ENCODE measurements at regions of chr1 and their contacts with region 1.

Region 1: GRCh38 chr1:200558866-200559459 is 61.6 kb downstream of the KIF14 start:
- DNase-seq: no peak
- ATAC-seq: peak; percentile 64
- H3K4me3 ChIP-seq: no peak overlapping the region
- H3K27ac ChIP-seq: no peak overlapping the region
- H3K4me1 ChIP-seq: peaks cover 17% of the 10 kb centered on the region
- H3K27me3 ChIP-seq: no peaks in the 10 kb centered on the region
- CTCF ChIP-seq: peak; percentile 56 to 77 (median 60)
- EP300 ChIP-seq: no peak
- POLR2A ChIP-seq: no peak
- RAD21 ChIP-seq: peak; percentile 82

Region 2: DNA sequence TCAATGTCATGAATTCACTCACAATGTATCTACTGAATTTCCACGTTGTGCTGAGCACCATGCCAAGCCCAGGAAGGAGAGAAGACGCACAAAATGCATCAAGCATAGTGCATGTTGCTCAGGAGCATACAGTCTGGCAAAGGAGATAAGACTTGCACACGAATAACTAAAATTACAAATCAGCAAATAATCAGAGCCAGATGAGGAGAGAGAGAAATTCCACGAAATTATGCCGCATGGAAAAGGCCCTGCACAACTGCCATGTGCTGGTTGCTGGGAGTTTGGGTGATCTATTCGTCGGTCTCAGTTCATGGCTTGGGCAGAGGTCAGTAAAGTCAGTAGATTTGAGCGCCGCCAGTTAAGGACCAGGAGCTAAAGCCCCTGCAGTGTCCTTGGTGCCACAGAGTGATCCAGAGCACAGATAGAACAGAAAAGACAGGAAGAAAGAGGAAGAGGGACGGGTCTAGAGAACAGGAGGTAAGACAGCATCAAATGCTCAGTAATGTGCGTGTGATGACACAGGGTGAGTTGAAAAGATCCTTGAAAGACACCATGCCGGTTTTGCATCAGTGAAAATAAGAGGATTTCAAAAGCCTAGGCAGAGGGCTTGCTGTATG is 94.1 kb before region 1 on chr1:
- CTCF ChIA-PET with region 1: no interaction called
- POLR2A ChIA-PET with region 1: no interaction called
- RAD21 ChIA-PET with region 1: no interaction called
- SMC1A ChIA-PET with region 1: no interaction called
- in situ Hi-C with region 1: no loop called
- intact Hi-C with region 1: no loop called
- DNase-seq: no peak
- ATAC-seq: no peak
- H3K4me3 ChIP-seq: no peak overlapping the region
- H3K27ac ChIP-seq: no peak overlapping the region
- H3K4me1 ChIP-seq: no peaks in the 10 kb centered on the region
- H3K27me3 ChIP-seq: no peaks in the 10 kb centered on the region
- CTCF ChIP-seq: no peak
- EP300 ChIP-seq: no peak
- POLR2A ChIP-seq: no peak
- RAD21 ChIP-seq: no peak

Region 3: DNA sequence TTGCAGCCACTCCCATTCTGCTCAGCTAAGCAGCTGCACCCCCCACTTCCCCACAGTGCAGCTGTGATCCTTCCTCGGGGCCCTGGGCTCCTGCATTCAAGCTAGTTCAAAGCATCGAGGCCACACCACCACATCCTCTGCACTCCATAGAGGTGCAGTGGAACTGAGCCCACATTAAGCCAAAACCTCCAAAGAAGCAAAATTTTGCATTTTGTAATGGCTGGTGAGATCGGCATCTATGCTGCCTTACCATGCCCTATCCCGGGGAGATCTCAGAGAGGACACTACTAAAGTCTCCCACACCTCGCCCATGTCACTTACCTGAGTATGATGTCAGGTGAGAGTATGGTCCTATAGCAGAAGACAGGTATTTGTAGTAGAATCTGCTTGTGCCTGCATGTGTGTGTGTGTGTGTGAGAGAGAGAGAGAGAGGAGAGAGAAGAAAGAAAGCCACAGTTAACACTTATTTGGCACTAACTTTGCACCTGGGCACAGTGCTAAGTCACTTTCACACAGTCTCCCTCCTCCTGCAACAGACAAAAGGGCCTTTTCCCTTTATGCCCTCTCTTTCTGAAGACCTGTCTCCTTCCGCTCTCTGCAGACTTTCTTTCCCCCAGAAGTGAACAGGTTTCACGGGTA is 28.2 kb before region 1 on chr1:
- CTCF ChIA-PET with region 1: interaction called, 46 read pairs
- POLR2A ChIA-PET with region 1: no interaction called
- RAD21 ChIA-PET with region 1: interaction called, 11 read pairs
- SMC1A ChIA-PET with region 1: interaction called, 3 read pairs
- in situ Hi-C with region 1: no loop called
- intact Hi-C with region 1: no loop called
- DNase-seq: no peak
- ATAC-seq: peak; percentile 21; the same call in 2 of the 3 replicates
- H3K4me3 ChIP-seq: no peak overlapping the region
- H3K27ac ChIP-seq: no peak overlapping the region
- H3K4me1 ChIP-seq: peaks cover 11% of the 10 kb centered on the region
- H3K27me3 ChIP-seq: no peaks in the 10 kb centered on the region
- CTCF ChIP-seq: no peak
- EP300 ChIP-seq: no peak
- POLR2A ChIP-seq: no peak
- RAD21 ChIP-seq: no peak

Region 4: GRCh38 chr1:200542162-200542561 is 16.8 kb before region 1 on chr1:
- CTCF ChIA-PET with region 1: interaction called, 46 read pairs
- POLR2A ChIA-PET with region 1: no interaction called
- RAD21 ChIA-PET with region 1: interaction called, 11 read pairs
- SMC1A ChIA-PET with region 1: interaction called, 5 read pairs
- in situ Hi-C with region 1: no loop called
- intact Hi-C with region 1: no loop called
- DNase-seq: no peak
- ATAC-seq: no peak
- H3K4me3 ChIP-seq: no peak overlapping the region
- H3K27ac ChIP-seq: no peak overlapping the region
- H3K4me1 ChIP-seq: peaks cover 4% of the 10 kb centered on the region
- H3K27me3 ChIP-seq: no peaks in the 10 kb centered on the region
- CTCF ChIP-seq: no peak
- EP300 ChIP-seq: no peak
- POLR2A ChIP-seq: no peak
- RAD21 ChIP-seq: no peak

Region 5: DNA sequence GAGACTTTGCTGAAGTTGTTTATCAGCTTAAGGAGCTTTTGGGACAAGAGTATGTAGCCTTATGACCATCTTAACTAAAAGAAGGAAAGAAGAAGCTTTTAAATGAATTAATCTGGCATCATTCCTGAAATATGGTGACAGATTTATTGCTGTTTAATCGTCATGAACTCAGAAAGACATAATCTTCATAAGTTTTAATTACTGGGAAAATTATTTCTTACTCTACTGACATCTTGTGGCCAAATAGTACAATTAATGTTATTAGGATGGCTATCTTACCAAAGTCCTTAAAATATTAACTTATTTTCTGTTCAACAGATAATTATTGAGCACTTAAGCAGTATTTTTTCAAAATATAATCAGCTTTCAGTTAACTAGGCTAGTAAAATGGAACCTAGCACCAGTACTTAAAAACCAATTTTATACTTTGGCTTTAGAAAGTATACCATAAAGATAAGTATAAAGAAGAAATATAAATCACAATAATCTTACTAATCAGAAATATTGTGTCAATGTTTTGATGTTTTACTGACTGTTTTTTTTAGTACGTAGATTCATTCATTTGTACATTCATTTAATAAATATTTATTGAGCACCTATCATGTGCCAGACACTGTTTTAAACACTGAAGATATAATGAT is 279.1 kb after region 1 on chr1:
- CTCF ChIA-PET with region 1: interaction called, 27 read pairs
- POLR2A ChIA-PET with region 1: interaction called, 4 read pairs
- RAD21 ChIA-PET with region 1: interaction called, 9 read pairs
- SMC1A ChIA-PET with region 1: interaction called, 15 read pairs
- in situ Hi-C with region 1: no loop called
- intact Hi-C with region 1: loop called (anchors 2 kb)
- DNase-seq: no peak
- ATAC-seq: 0 out of 3 replicates have a peak, but pooled peaks have one; percentile 42
- H3K4me3 ChIP-seq: no peak overlapping the region
- H3K27ac ChIP-seq: no peak overlapping the region
- H3K4me1 ChIP-seq: no peaks in the 10 kb centered on the region
- H3K27me3 ChIP-seq: no peaks in the 10 kb centered on the region
- CTCF ChIP-seq: peak in 1 of 3 experiments; percentile 2; a peak in 2 of 6 replicates
- EP300 ChIP-seq: no peak
- POLR2A ChIP-seq: no peak
- RAD21 ChIP-seq: peak; percentile 28; the same call in 1 of the 2 replicates

Region 6: DNA sequence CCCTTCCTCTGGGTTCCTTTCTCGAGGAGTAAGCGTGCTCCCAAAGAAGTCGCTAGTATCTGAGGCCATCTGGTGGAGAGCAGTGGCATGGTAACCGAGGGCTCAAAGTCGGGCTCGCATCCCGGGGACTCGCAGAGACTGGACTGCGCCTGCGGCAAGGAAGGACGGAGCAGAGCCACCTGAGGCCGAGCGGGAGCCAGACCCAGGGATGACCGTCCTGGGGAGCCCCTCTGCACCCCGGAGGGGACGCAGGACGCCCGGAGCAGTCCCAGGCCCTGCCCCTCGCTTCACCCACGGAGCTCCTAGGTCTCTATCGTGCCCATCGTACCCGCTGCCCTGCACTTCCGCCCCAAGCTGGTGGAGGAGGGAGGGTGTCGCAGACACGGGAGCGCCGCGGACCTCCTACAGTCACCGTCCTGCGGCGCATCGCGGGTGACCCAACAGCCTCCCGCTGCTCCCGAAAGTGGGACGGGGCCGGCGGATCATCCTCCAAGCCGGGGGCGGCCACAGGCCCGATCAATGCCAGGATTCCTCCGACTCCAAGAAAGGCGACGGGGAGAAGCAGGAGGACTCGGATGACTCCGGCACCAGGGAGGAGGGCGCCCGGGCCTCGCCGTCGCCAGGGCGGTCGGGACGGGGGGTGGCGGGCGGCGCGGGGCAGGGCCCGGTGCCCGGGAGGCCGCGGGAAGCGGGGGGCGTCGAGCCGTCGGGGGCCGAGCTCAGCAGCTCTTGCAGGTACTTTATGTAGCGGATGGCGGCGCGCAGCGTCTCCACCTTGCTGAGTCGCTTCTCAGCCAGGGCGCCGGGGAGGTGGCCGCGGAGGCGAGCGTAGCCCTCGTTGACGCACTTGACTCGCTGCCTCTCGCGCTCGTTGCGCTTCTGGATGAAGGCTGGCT is 555.5 kb after region 1 on chr1:
- CTCF ChIA-PET with region 1: interaction called, 16 read pairs
- POLR2A ChIA-PET with region 1: no interaction called
- RAD21 ChIA-PET with region 1: interaction called, 3 read pairs
- SMC1A ChIA-PET with region 1: no interaction called
- in situ Hi-C with region 1: no loop called
- intact Hi-C with region 1: loop called (anchors 10 kb)
- DNase-seq: peak; percentile 17
- ATAC-seq: peak; percentile 97
- H3K4me3 ChIP-seq: peak overlapping the region; percentile 47
- H3K27ac ChIP-seq: no peak overlapping the region
- H3K4me1 ChIP-seq: no peaks in the 10 kb centered on the region
- H3K27me3 ChIP-seq: peaks cover 3 to 8% of the 10 kb centered on the region in 2 experiments; a peak in 3 of 4 replicates
- CTCF ChIP-seq: peak; percentile 79 to 89 (median 85)
- EP300 ChIP-seq: no peak
- POLR2A ChIP-seq: no peak
- RAD21 ChIP-seq: peak; percentile 84

Measured in GM12878 (cell line).